ENCODE measurements at regions of chr22 and their contacts with region 1.

Region 1: DNA sequence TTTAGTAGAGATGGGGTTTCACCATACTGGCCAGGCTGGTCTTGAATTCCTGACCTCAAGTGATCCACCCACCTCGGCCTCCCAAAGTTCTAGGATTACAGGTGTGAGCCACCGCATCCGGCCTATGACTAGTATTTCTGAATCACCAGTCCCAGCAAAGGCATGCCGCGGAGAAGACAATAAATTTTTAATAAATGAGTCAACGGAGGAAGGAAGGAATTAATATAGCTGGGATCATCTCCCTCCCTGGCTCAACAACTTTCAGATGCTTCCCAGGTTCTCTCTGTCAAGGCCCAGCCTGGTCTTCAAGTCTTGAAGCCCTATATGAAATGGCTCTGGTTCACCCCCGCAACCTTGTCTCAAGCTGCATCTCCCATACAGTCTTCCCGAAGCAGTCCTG is 45.7 kb downstream of the CYTH4 start:
- DNase-seq: peak; percentile 93
- ATAC-seq: peak; percentile 61
- H3K4me3 ChIP-seq: no peak overlapping the region
- H3K27ac ChIP-seq: peak overlapping the region; percentile 100
- H3K4me1 ChIP-seq: peaks cover 79% of the 10 kb centered on the region
- H3K27me3 ChIP-seq: no peaks in the 10 kb centered on the region
- CTCF ChIP-seq: no peak

Region 2: DNA sequence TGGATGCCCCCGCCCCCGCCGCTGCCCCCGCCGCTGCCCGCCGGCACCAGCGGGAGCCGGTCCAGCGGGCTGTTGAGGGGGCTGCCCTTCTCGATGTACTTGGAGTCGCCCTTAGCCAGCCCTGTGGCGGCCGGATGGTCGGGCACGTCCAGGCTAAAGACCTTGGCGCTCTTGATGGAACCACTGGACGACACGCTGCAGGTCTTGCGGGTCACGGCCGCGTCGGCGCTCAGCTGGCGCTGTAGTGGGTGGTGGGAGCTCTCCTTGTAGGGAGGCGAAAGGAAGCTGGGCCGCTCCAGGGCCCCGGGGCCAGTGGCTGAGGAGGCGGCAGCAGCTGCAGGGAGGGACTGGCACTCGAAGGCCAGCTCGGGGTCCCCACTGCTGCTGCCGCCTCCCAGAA is 45.4 kb after region 1 on chr22:
- CTCF ChIA-PET with region 1: no interaction called
- POLR2A ChIA-PET with region 1: interaction called, 19 read pairs
- intact Hi-C with region 1: no loop called
- DNase-seq: no peak
- ATAC-seq: no peak
- H3K4me3 ChIP-seq: no peak overlapping the region
- H3K27ac ChIP-seq: no peak overlapping the region
- H3K4me1 ChIP-seq: peaks cover 3% of the 10 kb centered on the region; the same call in 1 of the 2 replicates
- H3K27me3 ChIP-seq: no peaks in the 10 kb centered on the region
- CTCF ChIP-seq: no peak

Region 3: DNA sequence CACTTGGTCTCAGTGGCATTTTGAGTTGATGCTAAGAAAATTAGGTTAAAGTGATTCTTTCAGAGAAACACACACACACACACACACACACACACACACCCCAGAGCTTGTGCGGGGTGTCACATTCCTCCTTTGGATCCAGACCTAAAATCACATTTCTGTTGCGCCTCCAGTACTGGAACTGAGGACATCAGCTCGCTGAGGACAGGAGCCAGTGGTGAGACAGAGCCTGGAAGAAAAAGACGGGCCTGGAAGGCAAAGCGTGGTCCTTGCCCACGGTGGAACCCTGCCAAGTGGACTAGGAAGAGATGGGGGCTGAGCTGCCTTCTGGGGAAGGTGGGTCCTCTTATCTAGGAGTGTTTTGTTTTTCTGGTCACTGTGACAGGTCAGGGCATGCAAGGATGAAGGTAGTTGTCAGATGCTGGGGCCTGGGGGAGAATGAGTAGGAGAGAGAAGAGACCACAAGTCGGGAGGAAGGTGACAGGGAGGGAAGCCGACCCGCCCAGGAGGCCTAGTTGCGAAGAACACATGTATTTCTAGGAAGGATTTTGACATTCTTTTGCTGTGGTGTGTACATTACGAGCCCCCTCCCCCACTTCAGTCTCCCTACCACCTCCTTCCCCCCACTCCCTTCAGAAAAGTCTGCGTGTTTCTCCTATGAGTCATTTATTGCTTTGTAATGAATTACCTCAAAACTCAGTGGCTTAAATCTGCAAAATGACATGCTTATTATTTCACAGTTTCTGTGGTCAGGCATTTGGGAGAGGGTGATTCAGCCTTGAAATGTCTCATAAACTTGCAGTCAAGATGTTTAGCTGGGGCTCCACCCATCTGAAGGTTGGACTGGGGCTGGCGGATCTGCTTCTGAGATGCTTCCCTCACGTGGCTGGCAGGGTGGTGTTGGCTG is 104.0 kb after region 1 on chr22:
- CTCF ChIA-PET with region 1: no interaction called
- POLR2A ChIA-PET with region 1: no interaction called
- intact Hi-C with region 1: loop called (anchors 5 kb)
- DNase-seq: peak; percentile 97
- ATAC-seq: peak; percentile 76
- H3K4me3 ChIP-seq: peak overlapping the region; percentile 20; the same call in 1 of the 2 replicates
- H3K27ac ChIP-seq: peak overlapping the region; percentile 96
- H3K4me1 ChIP-seq: peaks cover 30% of the 10 kb centered on the region
- H3K27me3 ChIP-seq: no peaks in the 10 kb centered on the region
- CTCF ChIP-seq: no peak

Measured in PC-3 (cell line).